Activated naive CD4-positive, alpha-beta T cell treated with anti-CD3 and anti-CD28 coated beads, Interleukin-2, amount 10 ng/mL, durations not matched to agents 7 days and 5 days (primary cell): ENCODE measurements at regions of chr4 and their contacts with region 1.

Region 1: GRCh38 chr4:20684852-20685763 is 15.2 kb upstream of the PACRGL start:
- DNase-seq: no peak
- H3K4me3 Mint-ChIP-seq: no peak overlapping the region
- H3K27ac Mint-ChIP-seq: no peak overlapping the region
- H3K4me1 Mint-ChIP-seq: no peaks in the 10 kb centered on the region
- H3K27me3 Mint-ChIP-seq: no peaks in the 10 kb centered on the region

Region 2: GRCh38 chr4:19739101-19739720 is 945.9 kb before region 1 on chr4:
- CTCF ChIA-PET with region 1: no interaction called
- DNase-seq: no peak
- H3K4me3 Mint-ChIP-seq: no peak overlapping the region
- H3K27ac Mint-ChIP-seq: no peak overlapping the region
- H3K4me1 Mint-ChIP-seq: no peaks in the 10 kb centered on the region
- H3K27me3 Mint-ChIP-seq: no peaks in the 10 kb centered on the region

Region 3: DNA sequence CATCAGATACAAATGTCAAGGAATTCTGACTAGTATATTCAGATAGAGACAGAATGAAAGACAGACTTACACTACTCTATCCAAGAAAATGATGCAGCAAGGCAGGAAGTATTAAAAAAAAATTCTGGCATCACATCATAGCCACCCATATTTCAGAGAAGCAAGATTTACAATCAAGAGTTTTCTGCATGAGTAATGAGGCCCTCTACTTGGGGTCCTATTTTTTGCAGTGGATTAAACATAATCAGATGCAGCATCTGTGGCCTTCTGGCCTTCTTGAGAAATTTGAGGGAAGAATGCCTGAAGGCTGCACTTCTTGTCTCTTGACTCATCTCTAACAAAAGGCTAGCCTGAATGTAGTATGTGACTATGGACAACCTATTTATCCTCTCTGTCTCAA is 481.6 kb before region 1 on chr4:
- CTCF ChIA-PET with region 1: no interaction called
- DNase-seq: no peak
- H3K4me3 Mint-ChIP-seq: no peak overlapping the region
- H3K27ac Mint-ChIP-seq: no peak overlapping the region
- H3K4me1 Mint-ChIP-seq: no peaks in the 10 kb centered on the region
- H3K27me3 Mint-ChIP-seq: no peaks in the 10 kb centered on the region

Region 4: GRCh38 chr4:20416800-20417199 is 268.3 kb before region 1 on chr4:
- CTCF ChIA-PET with region 1: interaction called, 14 read pairs
- DNase-seq: no peak
- H3K4me3 Mint-ChIP-seq: no peak overlapping the region
- H3K27ac Mint-ChIP-seq: no peak overlapping the region
- H3K4me1 Mint-ChIP-seq: peaks cover 12% of the 10 kb centered on the region
- H3K27me3 Mint-ChIP-seq: no peaks in the 10 kb centered on the region

Region 5: GRCh38 chr4:20422398-20422797 is 262.7 kb before region 1 on chr4:
- CTCF ChIA-PET with region 1: interaction called, 14 read pairs
- DNase-seq: peak; percentile 54
- H3K4me3 Mint-ChIP-seq: no peak overlapping the region
- H3K27ac Mint-ChIP-seq: no peak overlapping the region
- H3K4me1 Mint-ChIP-seq: peaks cover 12% of the 10 kb centered on the region
- H3K27me3 Mint-ChIP-seq: peaks cover 4% of the 10 kb centered on the region

Region 6: DNA sequence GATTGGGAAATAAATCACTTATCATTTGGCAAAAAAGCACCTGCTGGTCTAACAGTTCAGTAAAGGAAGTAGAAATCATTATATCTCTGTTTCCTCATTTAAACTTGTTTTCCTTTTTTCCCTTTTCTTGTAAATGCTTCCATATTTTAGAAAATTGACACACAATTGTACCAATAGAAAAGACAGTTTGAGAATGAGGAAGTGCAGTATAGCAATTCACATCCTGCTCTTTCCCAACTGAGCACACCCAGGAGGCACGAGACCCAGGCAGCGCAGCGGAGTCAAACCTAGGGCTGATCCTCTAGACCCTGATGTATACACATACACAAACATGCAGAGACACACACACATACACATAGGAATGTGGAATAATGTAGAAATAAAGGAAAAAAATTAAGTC is 59.7 kb before region 1 on chr4:
- CTCF ChIA-PET with region 1: no interaction called
- DNase-seq: no peak
- H3K4me3 Mint-ChIP-seq: no peak overlapping the region
- H3K27ac Mint-ChIP-seq: no peak overlapping the region
- H3K4me1 Mint-ChIP-seq: peaks cover 2% of the 10 kb centered on the region
- H3K27me3 Mint-ChIP-seq: no peaks in the 10 kb centered on the region